ENCODE measurements at regions of chr15 and their contacts with region 1.

Region 1: DNA sequence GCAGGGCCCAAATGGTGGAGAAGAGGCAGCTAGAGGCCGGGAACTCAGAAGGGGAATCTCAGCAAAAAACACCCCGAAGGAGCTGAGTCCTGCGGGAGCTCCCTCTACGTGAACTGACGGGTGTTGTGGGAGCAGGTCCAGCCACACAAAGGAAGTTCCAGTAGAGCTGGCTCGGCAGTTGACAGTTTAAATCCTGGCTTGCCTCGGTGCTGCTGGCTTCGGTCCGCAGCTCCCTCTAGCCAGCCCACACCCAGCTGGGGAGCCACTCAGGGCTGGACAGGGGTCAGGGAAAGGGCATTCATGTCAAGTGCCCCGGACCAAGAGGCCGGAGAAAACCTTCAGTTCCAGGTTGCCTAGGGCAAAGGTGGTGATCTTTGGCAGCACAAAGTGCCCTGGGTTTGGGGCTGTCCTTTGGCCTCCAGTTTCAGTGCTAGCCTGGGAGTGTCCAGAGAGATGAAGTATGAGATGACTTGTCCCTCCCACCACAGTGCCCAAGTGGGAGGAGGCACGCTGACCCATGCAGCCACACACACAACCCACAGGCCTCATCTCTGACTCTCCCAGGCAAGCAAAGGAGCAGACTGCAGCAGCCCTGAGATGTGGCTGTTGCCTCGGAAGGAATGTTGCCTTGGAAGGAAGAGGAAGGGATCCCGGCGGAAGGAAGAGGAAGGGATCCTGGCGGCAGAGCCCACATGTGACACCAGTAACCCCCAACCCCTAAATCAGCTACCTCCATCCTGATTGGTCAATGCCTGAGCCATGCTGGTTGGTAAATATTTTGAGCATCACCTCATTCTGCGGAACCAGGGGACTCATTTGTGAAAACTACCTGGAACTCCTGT is 13.8 kb upstream of the ANPEP start:
- DNase-seq: no peak
- ATAC-seq: no peak
- H3K4me3 ChIP-seq: no peak overlapping the region
- H3K27ac ChIP-seq: no peak overlapping the region
- H3K4me1 ChIP-seq: no peaks in the 10 kb centered on the region; the same call in 1 of the 2 replicates
- H3K27me3 ChIP-seq: no peaks in the 10 kb centered on the region
- CTCF ChIP-seq: no peak
- EP300 ChIP-seq: no peak
- POLR2A ChIP-seq: no peak
- RAD21 ChIP-seq: no peak

Region 2: DNA sequence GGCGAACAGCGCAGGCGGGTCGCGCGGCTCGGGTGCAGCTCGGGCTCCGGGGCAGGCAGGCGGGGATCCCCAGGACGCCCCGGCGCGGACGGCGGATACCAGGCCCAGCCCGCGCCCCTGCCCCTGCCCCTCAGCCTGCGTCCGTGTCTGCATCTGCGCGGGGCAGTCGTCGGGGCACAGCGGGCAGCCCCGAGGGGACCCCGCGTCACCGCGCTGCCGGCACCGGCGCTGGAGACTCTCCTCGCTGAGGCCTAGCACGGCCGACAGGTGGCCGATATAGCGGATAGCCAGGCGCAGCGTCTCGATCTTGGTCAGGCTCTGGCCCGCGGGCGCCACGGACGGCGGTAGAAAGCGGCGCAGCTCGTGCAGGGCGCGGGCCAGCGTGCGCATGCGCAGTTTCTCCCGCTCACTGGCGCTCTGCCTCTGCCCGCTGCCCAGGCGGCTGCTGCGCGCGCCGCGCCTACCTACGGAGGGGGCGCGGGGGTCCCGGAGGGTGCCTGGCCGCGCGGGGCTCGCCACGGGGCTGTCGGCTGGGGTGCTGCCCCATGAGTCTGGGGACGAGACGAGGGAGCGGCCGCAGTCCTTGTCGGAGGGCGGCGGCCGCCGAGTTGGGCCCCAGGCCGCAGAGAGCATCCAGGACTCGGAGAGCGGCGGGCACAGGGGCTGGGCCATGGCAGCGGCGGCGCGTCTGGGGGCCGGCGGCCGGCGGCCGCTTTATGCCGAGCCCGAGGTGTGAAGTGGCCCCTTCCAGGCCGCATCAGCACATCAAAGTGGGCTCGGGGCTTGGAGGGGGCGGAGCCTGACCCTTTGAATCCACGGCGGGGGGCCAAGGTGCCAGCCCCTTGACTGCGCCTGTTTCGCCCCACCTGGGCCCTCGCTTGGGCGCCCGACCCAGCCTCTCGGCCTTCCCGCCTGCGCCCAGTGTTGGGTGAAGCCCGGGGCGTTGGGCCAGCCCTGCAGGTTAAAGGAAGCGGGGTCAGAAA is 77.6 kb before region 1 on chr15 and contains the start of gene MESP1:
- CTCF ChIA-PET with region 1: no interaction called
- POLR2A ChIA-PET with region 1: no interaction called
- RAD21 ChIA-PET with region 1: no interaction called
- SMC1A ChIA-PET with region 1: no interaction called
- in situ Hi-C with region 1: no loop called
- intact Hi-C with region 1: loop called (anchors 10 kb)
- DNase-seq: peak; percentile 51
- ATAC-seq: peak; percentile 98
- H3K4me3 ChIP-seq: peak within 1 kb of the TSS; percentile 65
- H3K27ac ChIP-seq: no peak within 1 kb of the TSS
- H3K4me1 ChIP-seq: peaks cover 9% of the 10 kb centered on the region
- H3K27me3 ChIP-seq: peaks cover 0 to 4% of the 10 kb centered on the region in 2 experiments; a peak in 2 of 4 replicates
- CTCF ChIP-seq: peak; percentile 52 to 76 (median 74)
- EP300 ChIP-seq: no peak
- POLR2A ChIP-seq: no peak; the same call in none of the 2 replicates
- RAD21 ChIP-seq: no peak; the same call in 1 of the 2 replicates
- polyA plus RNA-seq, gene MESP1: not detected

Region 3: GRCh38 chr15:89893696-89894455 is 65.4 kb after region 1 on chr15 and contains the start of gene AP3S2:
- CTCF ChIA-PET with region 1: no interaction called
- POLR2A ChIA-PET with region 1: no interaction called
- RAD21 ChIA-PET with region 1: no interaction called
- SMC1A ChIA-PET with region 1: no interaction called
- in situ Hi-C with region 1: no loop called
- intact Hi-C with region 1: no loop called
- DNase-seq: peak; percentile 73
- ATAC-seq: peak; percentile 90
- H3K4me3 ChIP-seq: peak within 1 kb of the TSS; percentile 97
- H3K27ac ChIP-seq: peak within 1 kb of the TSS; percentile 87
- H3K4me1 ChIP-seq: peaks cover 23% of the 10 kb centered on the region
- H3K27me3 ChIP-seq: no peaks in the 10 kb centered on the region
- CTCF ChIP-seq: no peak
- EP300 ChIP-seq: peak in 1 of 2 experiments; percentile 31; a peak in 1 of 4 replicates
- POLR2A ChIP-seq: peak; percentile 92
- RAD21 ChIP-seq: no peak
- polyA plus RNA-seq, gene AP3S2: 10.0 to 13.1 TPM

Region 4: DNA sequence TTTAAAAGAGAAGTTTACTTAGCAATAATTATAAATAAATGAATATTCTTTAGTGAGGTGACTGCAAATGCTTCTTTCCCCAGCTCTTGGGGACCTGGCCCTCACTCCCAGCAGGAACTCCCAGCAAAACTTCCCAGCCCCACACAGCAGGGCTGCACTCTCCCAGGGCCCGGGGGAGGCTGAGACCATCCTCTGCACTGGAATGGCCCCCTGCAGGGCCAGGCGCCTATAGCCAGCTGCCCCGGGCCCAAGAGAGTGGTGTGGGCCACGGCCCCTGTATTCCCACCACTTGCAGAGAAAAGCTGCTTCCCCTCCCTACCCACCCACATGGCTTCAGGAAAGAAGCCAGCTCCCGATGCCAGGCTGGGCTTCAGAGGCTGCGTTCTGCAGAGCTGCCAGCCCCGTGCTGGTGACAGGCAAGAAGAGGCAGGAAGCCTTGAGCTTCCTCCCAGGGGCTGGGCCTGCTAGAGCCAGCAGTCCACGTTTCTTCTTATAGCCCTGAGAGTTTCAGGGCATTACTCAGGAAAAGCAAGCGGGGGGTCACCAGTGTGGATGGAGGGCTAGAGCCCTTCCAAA is 253.8 kb after region 1 on chr15:
- CTCF ChIA-PET with region 1: no interaction called
- POLR2A ChIA-PET with region 1: no interaction called
- RAD21 ChIA-PET with region 1: no interaction called
- SMC1A ChIA-PET with region 1: no interaction called
- in situ Hi-C with region 1: no loop called
- intact Hi-C with region 1: no loop called
- DNase-seq: no peak
- ATAC-seq: no peak
- H3K4me3 ChIP-seq: no peak overlapping the region
- H3K27ac ChIP-seq: no peak overlapping the region
- H3K4me1 ChIP-seq: no peaks in the 10 kb centered on the region
- H3K27me3 ChIP-seq: no peaks in the 10 kb centered on the region
- CTCF ChIP-seq: no peak
- EP300 ChIP-seq: no peak
- POLR2A ChIP-seq: 0 out of 2 replicates have a peak, but pooled peaks have one; percentile 8
- RAD21 ChIP-seq: no peak